Colonic mucosa (tissue), 4 donors: ENCODE measurements at regions of chr5 and their contacts with region 1.

Region 1: DNA sequence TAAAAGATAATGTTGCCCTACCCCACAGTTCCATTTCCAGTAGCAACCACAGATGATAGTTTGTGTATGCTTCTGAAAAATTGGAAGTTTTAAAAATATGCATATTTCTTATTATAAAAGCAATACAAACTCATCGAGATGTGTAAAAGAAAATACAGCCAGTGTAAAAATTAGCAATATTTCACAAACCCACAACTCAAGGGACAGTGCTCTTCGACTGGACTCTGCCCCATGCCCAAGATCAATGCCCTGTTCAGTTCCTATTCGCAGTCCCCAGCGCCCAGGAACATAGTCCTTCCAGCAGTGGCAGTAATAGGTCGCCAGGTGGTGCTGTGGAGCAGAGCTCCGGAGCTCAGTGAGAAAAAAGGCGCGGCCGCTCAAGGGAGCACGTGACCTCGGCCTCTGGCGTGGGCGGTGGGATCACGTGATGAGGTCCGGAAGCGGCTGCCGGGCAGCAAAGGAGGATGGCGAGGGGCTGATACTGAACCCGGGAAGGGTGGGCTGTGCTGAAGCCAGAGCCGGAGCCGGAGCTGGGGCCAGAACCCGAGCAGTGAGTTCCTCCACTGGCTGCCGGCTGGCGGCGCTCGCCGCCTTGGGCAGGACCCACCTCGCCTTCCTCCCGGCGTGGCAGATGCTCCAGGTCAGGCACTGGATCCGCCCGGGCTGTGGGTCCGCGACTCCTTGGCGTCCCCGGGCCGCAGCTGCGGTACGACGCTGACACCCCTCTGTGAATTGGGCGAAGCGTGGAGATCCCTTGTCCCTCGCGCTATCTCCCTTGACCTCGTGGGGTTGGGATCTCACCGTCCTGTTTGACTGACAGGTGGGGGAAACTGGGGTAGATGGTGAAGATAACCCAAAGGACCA is at the start of gene SLC36A1:
- DNase-seq: peak; percentile 97
- H3K4me3 ChIP-seq: peak within 1 kb of the TSS; percentile 61
- H3K27ac ChIP-seq: peak within 1 kb of the TSS; percentile 10
- H3K4me1 ChIP-seq: no peaks in the 10 kb centered on the region
- H3K27me3 ChIP-seq: no peaks in the 10 kb centered on the region
- CTCF ChIP-seq: peak; percentile 95
- total RNA-seq, gene SLC36A1: 20.2 to 30.6 TPM

Region 2: DNA sequence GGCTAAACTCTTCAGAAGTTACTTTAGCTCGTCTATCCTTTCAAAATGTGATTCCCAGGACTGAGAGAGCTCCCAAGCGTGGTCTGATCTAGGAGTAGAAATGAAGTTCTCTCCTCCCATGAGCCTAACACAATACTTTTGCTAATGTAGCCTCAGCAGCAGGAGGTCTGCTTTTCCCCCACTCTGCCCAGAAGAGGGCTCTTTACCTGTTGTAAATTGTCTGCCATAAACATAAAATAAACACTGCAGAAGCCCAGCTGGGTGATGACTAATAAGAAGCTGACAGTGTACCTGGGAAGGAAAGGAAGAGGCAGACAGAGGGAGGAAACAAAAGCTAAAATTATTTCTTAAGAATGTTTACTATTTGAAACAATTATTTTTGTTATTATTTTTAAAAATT is 159.2 kb before region 1 on chr5:
- intact Hi-C with region 1: no loop called
- DNase-seq: no peak
- H3K4me3 ChIP-seq: no peak overlapping the region
- H3K27ac ChIP-seq: no peak overlapping the region
- H3K4me1 ChIP-seq: no peaks in the 10 kb centered on the region
- H3K27me3 ChIP-seq: no peaks in the 10 kb centered on the region
- CTCF ChIP-seq: no peak

Region 3: DNA sequence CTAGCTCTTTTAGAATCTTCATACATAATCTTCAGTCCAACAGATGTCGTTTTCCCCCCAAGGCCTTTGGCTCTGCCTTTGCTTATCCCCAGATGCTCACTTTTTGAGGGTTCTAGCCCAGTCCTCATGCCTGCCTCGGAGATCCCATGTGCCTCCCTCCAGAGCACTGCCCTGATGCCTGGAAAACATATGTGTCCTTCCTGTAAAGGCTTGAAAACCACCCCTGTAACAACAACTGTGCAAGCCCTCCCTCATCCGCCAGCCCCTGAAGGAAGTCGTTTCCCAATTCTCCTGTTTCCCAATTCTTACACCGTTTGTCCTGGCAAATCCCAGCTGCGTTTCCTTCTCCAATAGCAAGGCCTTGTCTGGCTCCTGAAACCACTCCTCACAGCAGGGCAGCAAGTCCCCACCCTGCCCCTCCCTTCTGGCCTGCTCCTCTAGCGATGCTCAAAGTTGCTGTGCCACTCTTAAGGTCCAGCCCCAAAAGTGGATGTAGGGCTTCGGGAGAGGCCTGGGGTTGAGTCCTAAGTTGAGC is 52.2 kb after region 1 on chr5:
- intact Hi-C with region 1: loop called (anchors 2 kb)
- DNase-seq: no peak
- H3K4me3 ChIP-seq: no peak overlapping the region
- H3K27ac ChIP-seq: no peak overlapping the region
- H3K4me1 ChIP-seq: no peaks in the 10 kb centered on the region
- H3K27me3 ChIP-seq: no peaks in the 10 kb centered on the region
- CTCF ChIP-seq: no peak

Region 4: GRCh38 chr5:151651997-151652645 is 204.7 kb after region 1 on chr5:
- intact Hi-C with region 1: loop called (anchors 5 kb)
- DNase-seq: peak; percentile 80
- H3K4me3 ChIP-seq: no peak overlapping the region
- H3K27ac ChIP-seq: no peak overlapping the region
- H3K4me1 ChIP-seq: no peaks in the 10 kb centered on the region
- H3K27me3 ChIP-seq: no peaks in the 10 kb centered on the region
- CTCF ChIP-seq: peak; percentile 79

Region 5: DNA sequence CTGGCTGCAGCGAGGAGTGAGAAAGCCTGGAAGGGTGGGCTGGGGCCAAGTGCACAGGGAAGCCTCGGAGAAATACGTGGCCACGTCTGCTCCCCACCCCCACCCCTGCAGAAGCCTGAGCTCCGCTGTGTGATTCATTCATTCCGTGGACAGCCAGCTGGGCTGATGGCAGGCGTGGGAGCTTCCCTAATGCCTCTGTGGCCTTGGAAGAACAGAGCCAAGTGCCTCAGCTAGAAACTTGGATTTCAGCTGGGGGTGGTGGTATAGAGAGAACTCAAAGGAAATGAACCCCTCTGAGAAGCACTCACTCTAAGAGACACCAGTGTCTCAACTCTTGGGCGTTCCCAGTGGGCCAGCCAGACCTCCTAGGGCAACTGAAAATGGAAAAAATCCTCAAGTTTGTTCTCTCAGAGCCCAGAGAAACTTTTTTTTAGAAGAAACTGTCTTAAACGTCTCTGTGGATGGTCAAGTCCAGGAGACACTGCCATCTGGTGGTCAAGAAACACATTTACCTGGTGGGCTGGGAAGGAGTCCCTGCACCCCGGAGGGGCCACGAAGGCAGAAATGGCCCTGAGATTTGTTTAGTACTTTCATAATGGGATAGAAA is 293.0 kb after region 1 on chr5:
- intact Hi-C with region 1: loop called (anchors 2 kb)
- DNase-seq: peak; percentile 45
- H3K4me3 ChIP-seq: no peak overlapping the region
- H3K27ac ChIP-seq: peak overlapping the region; percentile 4
- H3K4me1 ChIP-seq: no peaks in the 10 kb centered on the region
- H3K27me3 ChIP-seq: no peaks in the 10 kb centered on the region
- CTCF ChIP-seq: peak; percentile 84